ENCODE measurements at regions of chr12 and their contacts with region 1.

Region 1: DNA sequence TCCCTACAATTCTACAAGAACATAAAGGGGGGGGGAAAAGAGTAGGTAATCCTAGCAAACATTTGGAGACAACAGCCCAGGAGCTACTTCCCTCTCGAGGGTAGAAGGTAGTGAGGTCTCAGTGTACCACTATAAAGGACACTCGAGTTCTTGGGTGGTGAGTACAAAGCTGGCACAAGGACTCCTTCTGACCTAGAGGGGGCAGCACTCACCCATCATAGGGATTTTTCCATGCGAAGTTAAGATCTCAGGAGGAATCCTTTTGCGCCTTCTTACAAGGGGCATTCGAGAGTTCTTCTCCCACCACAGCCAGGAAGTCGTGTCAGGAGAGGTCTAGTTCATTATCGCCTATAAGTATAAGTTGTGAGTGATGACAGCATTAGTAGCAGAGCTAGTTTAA is 200.2 kb upstream of the RBM19 start:
- DNase-seq: peak in 1 of 2 donors; percentile 45
- ATAC-seq: peak; percentile 52 to 76 (median 66)
- H3K4me3 ChIP-seq: no peak overlapping the region
- H3K27ac ChIP-seq: no peak overlapping the region
- H3K4me1 ChIP-seq: no peaks in the 10 kb centered on the region
- H3K27me3 ChIP-seq: peaks cover 0 to 13% (median 8%) of the 10 kb centered on the region in 7 donors
- CTCF ChIP-seq: peak; percentile 33 to 80 (median 67)

Region 2: DNA sequence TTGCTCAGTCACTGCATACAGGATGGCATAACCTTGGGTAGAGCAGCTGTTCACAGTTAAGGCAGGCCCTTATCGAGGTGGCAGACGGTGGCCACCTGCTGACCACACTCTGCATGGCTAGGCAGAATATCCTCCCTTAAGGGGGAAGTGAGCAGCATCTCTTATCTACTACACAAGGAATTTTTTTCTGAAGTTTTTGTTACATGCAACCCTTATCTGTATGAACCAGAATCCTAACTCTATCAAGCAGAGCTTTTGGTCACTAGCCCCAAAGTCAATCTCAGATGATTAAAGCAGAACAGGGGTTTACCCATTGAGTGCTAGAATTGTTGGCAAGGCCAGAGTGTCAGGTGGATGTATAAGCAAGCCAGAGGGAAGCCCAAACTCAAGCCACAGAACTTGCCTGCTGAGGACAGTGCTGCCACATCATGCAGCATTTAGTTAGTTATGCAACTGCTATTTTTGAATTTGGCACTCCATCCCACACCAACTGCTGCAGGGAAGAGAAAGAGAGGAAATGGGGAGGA is 46.8 kb after region 1 on chr12:
- intact Hi-C with region 1: loop called in 2 of 10 experiments (anchors 2 kb)
- DNase-seq: peak in 1 of 2 donors; percentile 39
- ATAC-seq: peak; percentile 81 to 93 (median 90)
- H3K4me3 ChIP-seq: no peak overlapping the region
- H3K27ac ChIP-seq: peak overlapping the region in 3 of 10 donors; percentile 5 to 55 (median 18)
- H3K4me1 ChIP-seq: peaks cover 0 to 14% (median 7%) of the 10 kb centered on the region in 9 donors
- H3K27me3 ChIP-seq: peaks cover 0 to 16% (median 0%) of the 10 kb centered on the region in 7 donors
- CTCF ChIP-seq: peak in 7 of 9 donors; percentile 13 to 51 (median 34)